ENCODE measurements at regions of chr12 and their contacts with region 1.

Region 1: GRCh38 chr12:6140651-6141447 is 16.4 kb upstream of the VWF start:
- DNase-seq: peak in 8 of 10 donors; percentile 9 to 72 (median 40)
- ATAC-seq: peak; percentile 65 to 91
- H3K4me3 Mint-ChIP-seq: peak overlapping the region; percentile 46 to 88 (median 80)
- H3K27ac Mint-ChIP-seq: peak overlapping the region; percentile 97 to 99 (median 98)
- H3K4me1 Mint-ChIP-seq: peaks cover 23 to 64% (median 53%) of the 10 kb centered on the region in 4 donors
- H3K27me3 Mint-ChIP-seq: peaks cover 0 to 2% (median 0%) of the 10 kb centered on the region in 5 donors

Region 2: DNA sequence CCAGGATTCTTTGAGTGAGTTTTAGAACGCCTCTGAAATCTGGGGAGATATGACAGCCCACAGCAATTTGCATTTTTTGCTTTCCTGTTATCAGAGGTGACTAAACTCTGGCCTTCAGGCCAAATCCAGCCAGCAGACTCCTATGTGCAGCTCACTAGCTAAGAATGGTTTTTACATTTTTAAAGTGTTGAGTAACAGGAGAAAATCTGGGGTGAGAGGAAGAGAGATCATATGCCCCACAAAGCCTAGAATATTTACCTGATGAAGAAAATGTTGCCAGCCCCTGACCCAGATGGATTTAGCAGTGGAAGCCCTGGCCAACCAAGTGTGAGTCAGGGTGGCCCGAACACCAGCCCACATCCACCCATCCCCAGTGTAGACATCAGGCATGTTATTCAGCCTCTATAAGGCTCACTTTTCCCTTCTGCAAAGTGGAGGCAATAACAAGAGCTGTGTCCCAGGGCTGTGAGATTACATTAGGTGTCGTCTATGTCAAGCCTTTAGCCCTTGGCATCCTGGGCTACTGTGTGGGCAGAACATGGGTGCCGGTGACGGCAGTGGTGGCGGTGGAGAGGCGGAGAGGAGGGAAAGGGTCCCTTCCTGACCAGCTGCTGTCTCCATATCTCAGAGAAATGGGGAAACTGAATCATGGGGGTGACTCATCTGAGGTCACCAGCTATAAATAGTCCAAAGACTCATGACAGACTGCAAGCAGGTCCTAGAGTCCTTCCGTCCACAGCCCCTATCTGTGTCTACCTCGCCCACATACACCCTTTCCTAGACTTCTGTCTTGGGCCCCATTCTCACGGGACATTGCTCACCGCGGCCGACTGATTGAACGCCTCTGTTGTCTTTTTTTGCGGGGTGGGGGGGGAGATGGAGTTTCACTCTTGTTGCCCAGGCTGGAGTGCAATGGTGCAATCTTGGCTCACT is 26.7 kb after region 1 on chr12:
- POLR2A ChIA-PET with region 1: interaction called, 30 read pairs
- DNase-seq: peak in 2 of 10 donors; percentile 18 to 34
- ATAC-seq: peak; percentile 38 to 72
- H3K4me3 Mint-ChIP-seq: peak overlapping the region in 9 of 10 donors; percentile 35 to 89 (median 72)
- H3K27ac Mint-ChIP-seq: peak overlapping the region; percentile 18 to 84 (median 70)
- H3K4me1 Mint-ChIP-seq: peaks cover 26 to 42% (median 38%) of the 10 kb centered on the region in 4 donors
- H3K27me3 Mint-ChIP-seq: no peaks in the 10 kb centered on the region

Region 3: DNA sequence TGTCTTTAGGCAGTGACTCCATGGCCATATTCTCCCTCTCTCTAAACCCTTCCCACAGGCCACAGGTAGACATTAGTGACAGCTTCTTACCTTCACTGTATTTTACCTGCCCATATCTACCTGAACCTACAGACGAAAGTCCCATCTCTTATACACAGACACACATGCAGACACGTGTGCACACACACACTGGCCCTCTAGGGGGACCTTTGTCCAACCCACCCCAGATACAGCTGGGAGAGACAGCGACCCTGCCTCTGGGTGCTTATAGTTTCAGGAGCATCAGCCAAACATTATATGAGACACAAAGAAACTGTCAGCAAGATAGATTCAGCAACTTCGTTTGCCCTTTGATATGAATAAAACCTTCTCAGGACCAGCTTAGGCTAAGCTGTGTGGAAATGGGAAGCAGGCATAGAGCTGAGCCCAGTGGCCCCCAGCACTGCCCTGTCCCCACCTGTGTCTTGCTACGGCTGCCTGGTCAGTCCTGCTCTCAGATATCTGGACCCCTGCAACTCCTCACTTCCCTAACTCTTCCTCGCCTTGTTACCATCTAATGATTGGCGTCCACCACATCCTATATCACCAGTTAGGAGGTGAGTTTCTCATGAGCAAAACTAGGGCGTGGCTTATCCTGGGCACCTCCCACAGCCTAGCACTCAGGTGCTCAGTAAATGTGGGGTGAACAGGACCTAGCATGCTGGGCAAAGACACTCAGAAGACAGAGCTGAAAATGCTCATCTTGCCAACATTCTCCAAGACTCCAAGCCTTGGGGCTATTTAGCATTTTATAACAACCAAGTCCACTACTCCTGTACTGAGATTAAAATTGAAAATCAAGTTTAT is 47.3 kb after region 1 on chr12:
- POLR2A ChIA-PET with region 1: interaction called, 13 read pairs
- DNase-seq: no peak
- ATAC-seq: peak in 1 of 2 donors; percentile 33
- H3K4me3 Mint-ChIP-seq: peak overlapping the region in 1 of 10 donors; percentile 62
- H3K27ac Mint-ChIP-seq: peak overlapping the region in 2 of 10 donors; percentile 15 to 33
- H3K4me1 Mint-ChIP-seq: peaks cover 23 to 27% (median 24%) of the 10 kb centered on the region in 4 donors
- H3K27me3 Mint-ChIP-seq: peaks cover 0 to 25% (median 3%) of the 10 kb centered on the region in 5 donors